Activated CD8-positive, alpha-beta T cell treated with anti-CD3 and anti-CD28 coated beads for 36 hours (primary cell): ENCODE measurements at regions of chr22 and their contacts with region 1.

Region 1: DNA sequence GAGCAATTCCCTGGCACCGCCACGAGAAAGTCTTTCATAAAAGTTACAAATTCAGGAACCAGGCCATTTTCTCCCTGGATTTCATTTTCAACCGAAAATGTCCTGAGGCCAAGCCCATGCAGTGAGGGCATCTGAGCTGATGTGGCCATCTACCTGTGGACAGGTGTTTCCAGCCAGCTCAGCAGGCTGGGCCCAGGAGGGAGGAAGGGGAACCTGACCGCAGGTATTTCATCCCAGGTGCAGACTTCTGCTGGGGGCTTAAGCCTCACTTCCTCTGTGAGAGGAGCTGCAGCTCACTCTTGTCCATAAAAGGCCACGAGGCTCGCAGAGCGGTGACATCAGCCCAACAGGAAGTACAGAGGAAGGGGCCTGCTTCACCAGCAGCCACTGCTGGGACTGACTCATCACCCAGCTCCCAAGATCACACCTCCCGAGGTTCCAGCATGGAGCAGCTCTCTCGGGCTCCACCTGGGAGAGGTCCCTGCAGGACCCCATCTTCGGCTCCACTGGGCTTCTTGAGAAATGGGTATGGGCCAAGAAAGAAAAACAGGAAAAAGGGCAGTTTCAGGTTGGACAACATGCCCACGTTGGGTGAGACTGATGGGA is 56.4 kb downstream of the MYH9 start:
- DNase-seq: peak; percentile 90
- ATAC-seq: peak; percentile 51
- H3K4me3 Mint-ChIP-seq: peak overlapping the region; percentile 90
- H3K27ac Mint-ChIP-seq: peak overlapping the region; percentile 100
- H3K4me1 Mint-ChIP-seq: peaks cover 97% of the 10 kb centered on the region
- H3K27me3 Mint-ChIP-seq: no peaks in the 10 kb centered on the region
- CTCF ChIP-seq: no peak

Region 2: DNA sequence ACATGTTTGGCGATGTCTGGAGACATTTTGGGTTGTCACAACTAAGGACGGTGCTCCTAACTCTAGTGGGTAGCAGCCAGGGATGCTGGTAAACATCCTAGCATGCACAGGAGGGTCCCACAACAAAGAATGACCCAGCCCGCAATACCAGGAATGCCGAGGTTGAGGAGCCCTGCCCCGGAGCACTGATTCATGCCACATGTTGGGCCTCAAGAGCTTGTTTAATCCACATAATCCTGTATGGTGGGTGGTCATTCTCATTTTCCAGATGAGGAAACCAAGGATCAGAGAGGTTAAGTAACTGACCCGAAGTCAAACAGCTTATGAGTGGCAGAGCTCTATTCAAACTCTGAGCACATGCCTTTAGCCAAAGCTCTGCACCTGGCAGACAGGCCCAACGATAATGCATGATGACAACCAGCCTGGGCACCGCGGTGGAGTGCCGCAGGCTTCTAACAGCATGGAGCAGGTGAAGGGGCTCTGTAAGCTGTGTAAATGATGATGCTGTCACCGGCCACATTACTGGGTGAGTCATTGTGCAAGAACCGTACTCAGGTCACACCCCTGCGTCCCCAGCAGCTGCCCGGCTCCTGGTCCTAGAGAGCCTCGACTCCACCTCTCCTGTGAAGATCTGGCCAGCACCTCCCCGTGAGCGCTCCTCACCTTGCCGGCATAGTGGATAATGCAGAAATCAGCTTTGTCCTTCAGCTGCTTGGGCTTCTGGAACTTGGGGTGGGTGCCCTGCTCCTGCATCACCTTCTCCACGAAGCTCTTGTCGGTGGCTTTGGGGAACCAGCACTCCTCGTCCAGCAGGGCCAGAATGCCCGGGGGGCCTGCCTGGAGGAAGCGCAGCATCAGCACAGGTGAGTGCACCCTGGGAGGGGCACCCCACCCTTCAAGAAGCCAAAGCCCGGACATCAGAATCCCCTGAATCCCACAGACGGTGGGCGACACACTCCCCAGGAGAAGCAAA is 19.7 kb before region 1 on chr22:
- CTCF ChIA-PET with region 1: interaction called, 4 read pairs
- POLR2A ChIA-PET with region 1: interaction called, 13 read pairs
- intact Hi-C with region 1: no loop called
- DNase-seq: no peak
- ATAC-seq: no peak
- H3K4me3 Mint-ChIP-seq: no peak overlapping the region
- H3K27ac Mint-ChIP-seq: peak overlapping the region; percentile 30
- H3K4me1 Mint-ChIP-seq: peaks cover 6% of the 10 kb centered on the region
- H3K27me3 Mint-ChIP-seq: no peaks in the 10 kb centered on the region
- CTCF ChIP-seq: no peak

Region 3: GRCh38 chr22:36365020-36365411 is 33.6 kb after region 1 on chr22:
- CTCF ChIA-PET with region 1: interaction called, 28 read pairs
- POLR2A ChIA-PET with region 1: interaction called, 1,125 read pairs
- intact Hi-C with region 1: no loop called
- DNase-seq: peak; percentile 97
- ATAC-seq: peak; percentile 88
- H3K4me3 Mint-ChIP-seq: peak overlapping the region; percentile 69
- H3K27ac Mint-ChIP-seq: peak overlapping the region; percentile 98
- H3K4me1 Mint-ChIP-seq: peaks cover 93% of the 10 kb centered on the region
- H3K27me3 Mint-ChIP-seq: no peaks in the 10 kb centered on the region
- CTCF ChIP-seq: no peak

Region 4: DNA sequence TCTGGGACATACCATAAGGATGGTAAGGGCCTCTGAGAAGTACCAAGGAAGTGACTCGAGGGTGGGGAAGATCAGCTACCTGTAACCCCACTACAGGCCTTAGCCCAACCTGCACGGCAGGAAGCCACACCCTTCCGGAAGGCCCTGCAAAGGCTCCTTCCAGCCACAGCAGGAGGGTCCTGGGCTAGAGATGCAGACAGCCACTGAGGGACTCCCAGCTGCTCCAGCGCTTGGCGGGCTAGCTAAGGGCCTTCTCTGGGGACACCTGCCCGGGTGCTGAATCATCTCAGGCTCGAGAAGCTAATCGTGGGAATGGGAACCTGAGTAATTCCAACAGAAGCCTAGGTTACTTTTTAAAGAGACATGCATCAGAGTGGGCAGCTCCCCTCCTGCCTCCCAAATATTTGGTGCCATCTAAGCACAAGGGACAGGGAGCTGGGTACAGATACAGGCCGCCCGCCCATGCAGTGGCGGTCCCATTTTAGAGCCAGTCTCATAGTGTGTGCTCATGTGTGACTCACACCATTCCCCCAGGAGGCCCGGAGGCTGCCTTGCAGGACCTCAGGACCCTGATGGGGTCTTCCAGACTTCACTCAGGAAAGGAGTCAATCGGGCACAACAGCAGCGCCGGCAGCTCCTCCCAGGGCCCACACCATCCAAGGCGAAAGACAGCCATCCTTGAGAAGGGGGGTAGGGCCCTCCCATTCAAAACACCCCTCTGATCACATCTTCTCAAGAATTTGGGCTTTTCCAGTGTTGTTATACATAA is 48.4 kb after region 1 on chr22:
- CTCF ChIA-PET with region 1: interaction called, 30 read pairs
- POLR2A ChIA-PET with region 1: interaction called, 1,125 read pairs
- intact Hi-C with region 1: loop called (anchors 5 kb)
- DNase-seq: peak; percentile 61
- ATAC-seq: peak; percentile 29
- H3K4me3 Mint-ChIP-seq: peak overlapping the region; percentile 72
- H3K27ac Mint-ChIP-seq: peak overlapping the region; percentile 96
- H3K4me1 Mint-ChIP-seq: peaks cover 86% of the 10 kb centered on the region
- H3K27me3 Mint-ChIP-seq: no peaks in the 10 kb centered on the region
- CTCF ChIP-seq: no peak

Region 5: GRCh38 chr22:36398621-36399469 is 67.4 kb after region 1 on chr22:
- CTCF ChIA-PET with region 1: no interaction called
- POLR2A ChIA-PET with region 1: no interaction called
- intact Hi-C with region 1: no loop called
- DNase-seq: no peak
- ATAC-seq: no peak
- H3K4me3 Mint-ChIP-seq: no peak overlapping the region
- H3K27ac Mint-ChIP-seq: no peak overlapping the region
- H3K4me1 Mint-ChIP-seq: peaks cover 17% of the 10 kb centered on the region
- H3K27me3 Mint-ChIP-seq: no peaks in the 10 kb centered on the region
- CTCF ChIP-seq: no peak

Region 6: GRCh38 chr22:36454916-36455570 is 123.6 kb after region 1 on chr22:
- CTCF ChIA-PET with region 1: no interaction called
- POLR2A ChIA-PET with region 1: interaction called, 8 read pairs
- intact Hi-C with region 1: loop called (anchors 5 kb)
- DNase-seq: peak; percentile 98
- ATAC-seq: peak; percentile 75
- H3K4me3 Mint-ChIP-seq: peak overlapping the region; percentile 73
- H3K27ac Mint-ChIP-seq: peak overlapping the region; percentile 83
- H3K4me1 Mint-ChIP-seq: peaks cover 38% of the 10 kb centered on the region
- H3K27me3 Mint-ChIP-seq: no peaks in the 10 kb centered on the region
- CTCF ChIP-seq: no peak